ENCODE measurements at regions of chr17 and their contacts with region 1.

Region 1: DNA sequence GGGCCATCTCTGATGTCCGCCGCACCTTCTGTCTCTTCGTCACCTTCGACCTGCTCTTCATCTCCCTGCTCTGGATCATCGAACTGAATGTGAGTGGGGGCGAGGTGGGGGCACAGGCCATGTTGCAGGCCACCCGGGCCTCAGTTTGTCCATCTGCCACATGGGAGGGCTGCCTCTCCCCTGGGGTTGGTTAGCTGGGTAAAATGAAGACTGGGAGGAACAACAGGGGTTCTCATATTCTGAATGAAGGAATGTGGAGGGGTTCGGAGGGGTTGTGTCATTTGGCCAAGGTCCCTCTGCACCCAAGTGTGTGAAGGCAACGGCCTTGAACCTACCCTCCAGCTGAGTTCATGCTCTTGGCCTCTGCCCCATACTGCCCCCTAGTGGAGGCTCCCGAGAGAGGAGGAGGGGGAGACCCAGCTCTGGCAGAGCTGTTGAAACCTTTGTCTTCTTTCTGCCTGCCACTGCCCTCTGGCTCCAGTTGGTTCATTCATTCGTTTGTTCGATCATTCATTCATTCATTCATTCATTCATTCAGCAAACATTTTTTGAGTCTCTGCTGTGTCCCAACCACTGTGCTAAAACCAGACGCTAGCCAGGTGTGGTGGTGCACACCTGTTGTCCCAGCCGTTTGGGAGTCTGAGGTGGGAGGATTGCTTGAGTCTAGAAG is 11.4 kb upstream of the TCAP start:
- DNase-seq: peak; percentile 86
- H3K4me3 Mint-ChIP-seq: no peak overlapping the region
- H3K27ac Mint-ChIP-seq: peak overlapping the region; percentile 46
- H3K4me1 Mint-ChIP-seq: peaks cover 30% of the 10 kb centered on the region
- H3K27me3 Mint-ChIP-seq: no peaks in the 10 kb centered on the region

Region 2: GRCh38 chr17:39598047-39598481 is 55.7 kb before region 1 on chr17:
- CTCF ChIA-PET with region 1: no interaction called
- POLR2A ChIA-PET with region 1: no interaction called
- DNase-seq: no peak
- H3K4me3 Mint-ChIP-seq: no peak overlapping the region
- H3K27ac Mint-ChIP-seq: no peak overlapping the region
- H3K4me1 Mint-ChIP-seq: peaks cover 15% of the 10 kb centered on the region
- H3K27me3 Mint-ChIP-seq: peaks cover 87% of the 10 kb centered on the region

Region 3: DNA sequence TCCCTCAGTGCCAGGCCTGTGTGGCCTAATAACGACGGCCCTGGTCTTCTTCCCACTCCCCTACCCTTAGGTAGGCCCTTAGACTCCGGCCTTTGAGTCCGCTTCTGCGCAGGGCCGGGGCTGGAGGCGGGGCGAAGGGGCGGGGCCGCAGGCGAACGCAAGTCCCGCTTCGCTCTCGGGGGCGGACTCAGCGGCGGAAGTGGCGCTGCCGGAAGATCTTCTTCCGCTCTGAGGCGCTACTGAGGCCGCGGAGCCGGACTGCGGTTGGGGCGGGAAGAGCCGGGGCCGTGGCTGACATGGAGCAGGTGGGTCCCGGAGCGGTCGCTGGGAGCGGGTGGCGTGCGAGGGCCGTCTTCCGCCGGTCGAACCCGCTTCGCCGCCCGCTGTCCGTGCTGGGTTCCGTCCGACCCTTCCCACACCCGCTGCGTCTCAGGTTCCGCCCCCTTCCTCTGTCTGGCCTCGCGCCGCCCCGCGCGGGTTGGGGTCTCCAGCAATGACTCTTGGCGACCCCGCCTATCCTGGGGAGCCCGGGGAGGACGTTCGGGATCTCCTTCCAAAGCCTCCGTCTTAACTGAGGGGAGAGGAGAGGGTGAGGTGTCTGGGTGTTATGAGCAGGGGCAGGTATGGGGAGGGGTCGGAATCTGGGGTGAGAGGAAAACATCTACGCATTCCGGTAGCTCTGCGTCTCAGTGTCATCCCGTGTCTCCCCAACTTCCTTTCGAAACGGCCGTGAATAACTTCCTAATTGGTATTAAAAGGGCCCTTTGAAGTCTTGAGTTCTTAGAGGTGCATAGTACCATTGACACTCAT is 16.7 kb before region 1 on chr17 and contains the start of gene STARD3:
- CTCF ChIA-PET with region 1: interaction called, 17 read pairs
- POLR2A ChIA-PET with region 1: no interaction called
- DNase-seq: peak; percentile 91
- H3K4me3 Mint-ChIP-seq: peak within 1 kb of the TSS; percentile 91
- H3K27ac Mint-ChIP-seq: peak within 1 kb of the TSS; percentile 89
- H3K4me1 Mint-ChIP-seq: peaks cover 52% of the 10 kb centered on the region
- H3K27me3 Mint-ChIP-seq: no peaks in the 10 kb centered on the region
- total RNA-seq, gene STARD3: 70.0 to 72.8 TPM

Region 4: GRCh38 chr17:39643271-39643670 is 10.5 kb before region 1 on chr17:
- CTCF ChIA-PET with region 1: interaction called, 11 read pairs
- POLR2A ChIA-PET with region 1: interaction called, 3 read pairs
- DNase-seq: no peak
- H3K4me3 Mint-ChIP-seq: no peak overlapping the region
- H3K27ac Mint-ChIP-seq: no peak overlapping the region
- H3K4me1 Mint-ChIP-seq: peaks cover 46% of the 10 kb centered on the region
- H3K27me3 Mint-ChIP-seq: no peaks in the 10 kb centered on the region

Region 5: GRCh38 chr17:39668199-39668966 is 14.6 kb after region 1 on chr17 and contains the start of gene PNMT:
- CTCF ChIA-PET with region 1: interaction called, 22 read pairs
- POLR2A ChIA-PET with region 1: interaction called, 3 read pairs
- DNase-seq: peak; percentile 72
- H3K4me3 Mint-ChIP-seq: no peak within 1 kb of the TSS
- H3K27ac Mint-ChIP-seq: peak within 1 kb of the TSS; percentile 81
- H3K4me1 Mint-ChIP-seq: peaks cover 6% of the 10 kb centered on the region
- H3K27me3 Mint-ChIP-seq: peaks cover 28% of the 10 kb centered on the region
- total RNA-seq, gene PNMT: 0.19 TPM in 1 of 2 experiments, not detected in the other

Measured in activated CD4-positive, alpha-beta T cell treated with anti-CD3 and anti-CD28 coated beads, Interleukin-2, amount 10 ng/mL, durations not matched to agents 7 days and 5 days (primary cell).